K562 (cell line): ENCODE measurements at regions of chr18 and their contacts with region 1.

Region 1: DNA sequence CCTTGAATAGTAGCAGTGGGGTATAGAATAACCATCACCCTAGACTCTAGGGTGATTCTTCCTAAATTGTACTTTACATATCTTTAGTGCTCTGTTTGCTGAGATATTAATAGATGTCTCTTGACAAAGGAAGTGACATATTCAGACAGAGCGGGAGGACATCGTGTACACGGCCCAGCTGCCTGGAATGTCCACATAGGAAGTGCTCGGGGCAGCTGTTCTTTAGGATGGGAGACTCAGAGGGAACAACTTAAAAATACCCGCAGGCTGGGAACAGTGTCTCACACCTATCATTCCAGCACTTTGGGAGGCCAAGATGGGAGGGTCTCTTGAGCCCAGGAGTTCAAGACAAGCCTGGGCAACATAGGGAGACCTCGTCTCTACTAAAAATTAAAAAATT is 206.1 kb downstream of the FAM210A start:
- DNase-seq: no peak
- ATAC-seq: no peak
- H3K4me3 ChIP-seq: no peak overlapping the region
- H3K27ac ChIP-seq: no peak overlapping the region
- H3K4me1 ChIP-seq: no peaks in the 10 kb centered on the region
- H3K27me3 ChIP-seq: peaks cover 0 to 21% of the 10 kb centered on the region in 2 experiments; a peak in 2 of 5 replicates
- CTCF ChIP-seq: no peak
- EP300 ChIP-seq: no peak
- POLR2A ChIP-seq: no peak
- RAD21 ChIP-seq: no peak

Region 2: DNA sequence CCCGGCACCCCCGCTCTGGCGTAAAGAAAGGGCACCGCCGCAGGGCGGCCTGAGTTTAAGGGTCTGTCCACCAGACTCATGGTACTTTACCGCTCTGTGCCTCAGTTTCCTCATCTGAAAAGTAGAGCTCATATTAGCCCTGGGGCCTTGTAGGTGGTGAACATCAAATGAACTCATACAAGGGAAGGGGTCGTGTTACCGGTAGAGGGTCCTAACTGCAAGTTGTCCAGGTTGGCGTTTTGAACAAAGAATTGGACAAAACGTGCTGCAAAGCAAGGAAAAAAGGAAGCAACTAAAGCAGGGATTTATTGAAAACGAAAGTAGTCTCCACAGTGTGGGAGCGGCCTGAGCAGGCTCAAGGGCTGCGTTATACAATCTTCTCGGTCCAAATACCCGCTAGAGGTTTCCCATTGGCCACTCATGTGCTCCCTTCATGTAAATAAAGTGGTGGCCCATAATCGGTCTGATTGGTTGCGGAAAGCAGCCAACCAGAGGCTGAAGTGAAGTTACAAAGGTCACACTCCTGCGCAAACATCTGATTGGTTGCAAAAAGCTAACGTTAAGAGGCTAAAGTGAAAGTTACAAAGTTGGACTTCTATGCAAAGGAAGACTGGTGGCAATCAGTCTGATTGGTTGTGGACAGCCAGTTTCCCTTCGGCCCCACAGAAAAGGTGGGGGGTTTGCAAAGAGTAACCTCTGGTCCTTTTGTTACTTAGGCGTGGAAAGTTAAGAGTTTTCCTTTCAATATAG is 382.5 kb before region 1 on chr18:
- CTCF ChIA-PET with region 1: no interaction called
- POLR2A ChIA-PET with region 1: no interaction called
- in situ Hi-C with region 1: no loop called
- intact Hi-C with region 1: no loop called
- DNase-seq: peak in 2 of 4 experiments; percentile 12 to 36
- ATAC-seq: peak; percentile 71
- H3K4me3 ChIP-seq: no peak overlapping the region
- H3K27ac ChIP-seq: no peak overlapping the region
- H3K4me1 ChIP-seq: peaks cover 0 to 15% of the 10 kb centered on the region in 2 experiments; a peak in 1 of 5 replicates
- H3K27me3 ChIP-seq: no peaks in the 10 kb centered on the region
- CTCF ChIP-seq: no peak
- EP300 ChIP-seq: no peak
- POLR2A ChIP-seq: no peak
- RAD21 ChIP-seq: no peak

Region 3: GRCh38 chr18:13464432-13465123 is 55.7 kb before region 1 on chr18:
- CTCF ChIA-PET with region 1: no interaction called
- POLR2A ChIA-PET with region 1: no interaction called
- in situ Hi-C with region 1: no loop called
- intact Hi-C with region 1: loop called (anchors 10 kb)
- DNase-seq: peak in 2 of 4 experiments; percentile 23 to 25
- ATAC-seq: no peak; the same call in 2 of the 3 replicates
- H3K4me3 ChIP-seq: no peak overlapping the region
- H3K27ac ChIP-seq: no peak overlapping the region
- H3K4me1 ChIP-seq: no peaks in the 10 kb centered on the region
- H3K27me3 ChIP-seq: peaks cover 0 to 17% of the 10 kb centered on the region in 2 experiments; a peak in 1 of 5 replicates
- CTCF ChIP-seq: no peak; a peak in 1 of 6 replicates
- EP300 ChIP-seq: no peak
- POLR2A ChIP-seq: no peak
- RAD21 ChIP-seq: no peak